Mammary epithelial cell (primary cell): ENCODE measurements at regions of chr4 and their contacts with region 1.

Region 1: GRCh38 chr4:41281038-41281634 is 24.4 kb downstream of the UCHL1 start:
- DNase-seq: peak; percentile 64
- H3K4me3 ChIP-seq: no peak overlapping the region
- H3K27ac ChIP-seq: no peak overlapping the region
- H3K4me1 ChIP-seq: no peaks in the 10 kb centered on the region
- H3K27me3 ChIP-seq: no peaks in the 10 kb centered on the region
- CTCF ChIP-seq: peak; percentile 87

Region 2: GRCh38 chr4:41394362-41394960 is 113.3 kb after region 1 on chr4:
- CTCF ChIA-PET with region 1: no interaction called
- dilution Hi-C with region 1: no loop called
- in situ Hi-C with region 1: no loop called
- intact Hi-C with region 1: no loop called
- DNase-seq: no peak
- H3K4me3 ChIP-seq: no peak overlapping the region
- H3K27ac ChIP-seq: no peak overlapping the region
- H3K4me1 ChIP-seq: no peaks in the 10 kb centered on the region
- H3K27me3 ChIP-seq: peaks cover 2% of the 10 kb centered on the region
- CTCF ChIP-seq: no peak

Region 3: GRCh38 chr4:41644288-41644914 is 363.3 kb after region 1 on chr4:
- CTCF ChIA-PET with region 1: no interaction called
- dilution Hi-C with region 1: loop called (anchors 25 kb)
- in situ Hi-C with region 1: no loop called
- intact Hi-C with region 1: loop called (anchors 1 kb)
- DNase-seq: no peak
- H3K4me3 ChIP-seq: no peak overlapping the region
- H3K27ac ChIP-seq: no peak overlapping the region
- H3K4me1 ChIP-seq: no peaks in the 10 kb centered on the region
- H3K27me3 ChIP-seq: peaks cover 13% of the 10 kb centered on the region
- CTCF ChIP-seq: peak; percentile 62 to 83

Region 4: GRCh38 chr4:41661442-41662076 is 380.4 kb after region 1 on chr4:
- CTCF ChIA-PET with region 1: interaction called, 3 read pairs
- dilution Hi-C with region 1: no loop called
- in situ Hi-C with region 1: loop called (anchors 10 kb)
- intact Hi-C with region 1: loop called (anchors 1 kb)
- DNase-seq: peak; percentile 19
- H3K4me3 ChIP-seq: no peak overlapping the region
- H3K27ac ChIP-seq: no peak overlapping the region
- H3K4me1 ChIP-seq: peaks cover 6% of the 10 kb centered on the region
- H3K27me3 ChIP-seq: peaks cover 4% of the 10 kb centered on the region
- CTCF ChIP-seq: peak; percentile 94 to 95

Region 5: DNA sequence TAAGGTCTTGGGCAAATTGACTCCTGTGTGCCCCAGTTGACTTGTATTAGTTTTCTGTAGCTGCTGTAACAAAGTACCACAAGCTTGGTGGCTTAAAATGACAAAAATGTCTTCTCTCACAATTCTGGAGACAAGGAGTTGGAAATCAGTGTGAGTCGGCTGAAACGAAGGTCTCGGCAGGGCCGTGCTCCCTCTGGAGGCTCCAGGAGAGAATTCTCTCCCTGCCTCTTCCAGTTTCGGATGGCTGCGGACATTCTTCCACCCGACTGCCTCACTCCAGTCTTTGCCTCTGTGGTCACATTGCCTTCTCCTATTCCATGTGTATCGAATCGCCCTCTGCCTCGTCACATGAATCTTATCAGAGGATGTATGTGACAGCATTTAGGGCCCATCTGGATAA is 533.4 kb after region 1 on chr4:
- CTCF ChIA-PET with region 1: no interaction called
- dilution Hi-C with region 1: no loop called
- in situ Hi-C with region 1: no loop called
- intact Hi-C with region 1: no loop called
- DNase-seq: peak; percentile 1
- H3K4me3 ChIP-seq: no peak overlapping the region
- H3K27ac ChIP-seq: no peak overlapping the region
- H3K4me1 ChIP-seq: no peaks in the 10 kb centered on the region
- H3K27me3 ChIP-seq: peaks cover 7% of the 10 kb centered on the region
- CTCF ChIP-seq: peak in 1 of 2 donors; percentile 38

Region 6: DNA sequence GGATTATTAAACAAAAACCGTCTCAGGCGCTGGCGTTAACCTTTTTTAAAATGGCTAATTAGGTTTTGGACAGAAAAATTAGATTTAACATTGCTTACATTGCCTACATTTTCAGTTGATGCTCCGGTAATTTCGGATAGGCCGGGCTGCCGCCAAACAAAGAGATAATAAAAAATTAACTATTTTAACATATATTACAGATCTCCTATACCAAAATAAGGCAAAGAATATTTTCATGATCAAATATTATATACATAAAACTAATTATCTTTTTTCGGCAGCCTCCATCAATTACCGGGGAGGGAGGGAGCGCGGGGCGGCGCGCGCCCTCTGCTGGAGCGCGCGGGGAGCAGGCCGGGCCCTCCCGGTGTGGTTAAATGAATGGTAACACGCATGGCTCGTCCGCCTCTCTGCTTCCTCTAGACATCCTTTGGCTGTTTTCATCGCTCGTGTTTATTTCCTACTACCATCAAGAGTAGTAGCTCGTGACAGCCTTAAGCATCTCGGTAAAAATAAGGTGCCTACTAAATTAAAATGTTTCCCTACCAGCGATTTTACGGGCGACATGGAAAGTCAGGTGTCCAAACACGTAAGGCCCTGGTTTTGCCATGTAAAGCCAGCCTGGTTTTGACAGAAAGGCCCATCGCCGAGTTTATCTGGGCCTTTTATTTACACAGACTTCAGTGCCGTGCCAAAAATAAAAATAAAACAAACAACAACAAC is 601.6 kb after region 1 on chr4:
- CTCF ChIA-PET with region 1: no interaction called
- dilution Hi-C with region 1: no loop called
- in situ Hi-C with region 1: loop called (anchors 10 to 25 kb)
- intact Hi-C with region 1: loop called (anchors 2 kb)
- DNase-seq: peak; percentile 21
- H3K4me3 ChIP-seq: no peak overlapping the region
- H3K27ac ChIP-seq: no peak overlapping the region
- H3K4me1 ChIP-seq: peaks cover 12% of the 10 kb centered on the region
- H3K27me3 ChIP-seq: peaks cover 54% of the 10 kb centered on the region
- CTCF ChIP-seq: peak; percentile 69 to 94

Region 7: DNA sequence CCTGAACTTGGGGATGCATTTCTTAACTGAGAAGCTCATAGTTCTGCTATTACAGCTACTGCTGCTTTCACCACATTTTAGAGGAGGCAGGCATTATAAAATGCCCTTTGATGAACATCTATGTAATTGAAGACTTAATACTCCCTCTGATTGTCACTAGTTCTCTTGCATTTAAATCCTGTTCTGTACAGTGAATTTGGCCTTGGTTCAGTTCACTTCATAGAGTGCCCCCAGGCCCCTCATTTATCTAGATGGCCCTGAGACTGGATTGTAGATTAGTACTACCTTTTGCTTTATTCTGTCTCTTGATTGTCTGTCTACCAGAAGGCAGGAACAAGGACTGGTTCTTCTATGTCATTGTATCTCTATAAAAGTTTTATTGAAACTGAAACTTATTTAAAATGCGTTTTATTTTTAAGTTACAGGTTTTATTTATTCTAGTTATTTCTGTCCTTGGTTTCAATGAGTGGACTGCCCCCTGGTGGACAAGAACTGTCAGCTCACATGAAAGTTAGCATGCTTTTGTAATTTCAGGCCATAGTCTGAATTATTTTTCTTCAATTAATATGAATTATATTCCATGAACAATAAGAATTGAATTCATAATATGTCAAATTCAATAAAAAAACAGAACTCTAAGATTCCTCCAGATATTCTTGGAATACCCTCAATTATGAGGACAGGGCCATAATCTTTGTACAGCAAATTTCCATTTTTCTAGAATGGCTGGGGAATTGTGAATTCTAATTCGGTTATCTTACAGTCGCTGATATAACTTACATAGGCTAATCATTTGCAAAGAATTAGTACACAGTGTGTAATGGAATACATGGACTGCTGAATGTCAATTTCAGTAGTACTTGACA is 606.9 kb after region 1 on chr4:
- CTCF ChIA-PET with region 1: no interaction called
- dilution Hi-C with region 1: no loop called
- in situ Hi-C with region 1: loop called (anchors 10 to 25 kb)
- intact Hi-C with region 1: loop called (anchors 1 kb)
- DNase-seq: no peak
- H3K4me3 ChIP-seq: no peak overlapping the region
- H3K27ac ChIP-seq: no peak overlapping the region
- H3K4me1 ChIP-seq: no peaks in the 10 kb centered on the region
- H3K27me3 ChIP-seq: peaks cover 9% of the 10 kb centered on the region
- CTCF ChIP-seq: peak; percentile 86 to 92

Region 8: DNA sequence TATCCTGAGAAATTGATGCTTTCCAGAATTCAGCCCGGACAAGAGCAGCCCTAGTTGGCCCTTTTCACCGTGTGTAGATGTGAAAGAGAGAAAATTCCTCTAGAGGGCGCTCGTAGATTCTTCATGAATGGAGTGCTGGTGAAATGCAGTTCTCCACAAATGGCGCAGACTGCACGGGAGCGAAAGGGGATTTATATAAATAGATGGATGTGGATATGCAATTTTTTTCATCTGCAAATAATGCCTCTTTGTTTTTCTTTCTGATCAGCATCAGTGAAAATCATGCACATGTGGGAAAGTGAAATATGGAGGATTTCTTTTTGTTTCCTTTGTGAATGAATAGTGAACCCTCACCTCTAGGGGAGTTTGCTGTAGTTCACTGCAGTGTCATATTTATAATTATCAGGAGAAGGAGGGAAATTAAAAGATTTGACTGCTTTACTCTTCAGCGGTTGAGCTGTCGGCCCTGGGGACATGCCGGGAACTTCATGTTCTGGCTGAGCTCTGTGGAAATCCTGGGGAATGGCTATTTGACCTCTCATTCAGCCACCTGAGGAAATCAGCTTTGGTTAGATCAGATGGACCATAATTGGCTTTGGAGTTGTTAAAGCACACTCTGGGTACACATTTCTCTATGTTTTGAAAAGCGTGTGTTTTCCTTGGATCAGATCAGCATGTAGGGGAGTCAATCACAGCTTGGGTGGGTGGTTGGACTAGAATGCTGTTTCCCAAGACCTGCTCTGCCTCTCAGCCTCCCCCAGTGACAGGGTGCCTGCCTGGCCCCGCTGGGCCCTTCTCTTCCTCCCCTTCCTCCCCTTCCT is 1001.2 kb after region 1 on chr4:
- CTCF ChIA-PET with region 1: no interaction called
- dilution Hi-C with region 1: no loop called
- in situ Hi-C with region 1: no loop called
- intact Hi-C with region 1: loop called (anchors 5 kb)
- DNase-seq: peak; percentile 37
- H3K4me3 ChIP-seq: no peak overlapping the region
- H3K27ac ChIP-seq: no peak overlapping the region
- H3K4me1 ChIP-seq: peaks cover 6% of the 10 kb centered on the region
- H3K27me3 ChIP-seq: no peaks in the 10 kb centered on the region
- CTCF ChIP-seq: peak; percentile 65 to 72